GM23248 (cell line): ENCODE measurements at regions of chr17 and their contacts with region 1.

Region 1: DNA sequence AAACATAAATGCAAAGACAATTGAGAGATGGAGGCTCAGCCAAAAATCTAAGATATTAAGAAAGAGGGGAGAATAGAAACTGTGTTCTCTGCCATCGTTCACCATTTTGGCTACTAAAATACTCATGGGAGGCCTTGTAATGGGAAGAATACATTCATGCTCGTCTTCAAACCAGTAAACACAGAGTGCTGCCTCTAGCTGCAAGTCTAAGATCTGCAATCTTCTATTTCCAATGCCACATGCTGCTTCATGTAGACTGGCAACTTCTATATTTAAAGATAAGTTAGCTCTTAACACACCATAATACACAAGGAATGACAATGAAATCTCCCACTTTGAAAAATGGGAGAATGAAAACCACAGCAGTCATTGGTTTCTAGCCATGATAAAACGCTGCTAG is 387.3 kb downstream of the HS3ST3B1 start:
- DNase-seq: no peak
- H3K4me3 ChIP-seq: no peak overlapping the region
- H3K27ac ChIP-seq: no peak overlapping the region
- H3K4me1 ChIP-seq: no peaks in the 10 kb centered on the region
- H3K27me3 ChIP-seq: no peaks in the 10 kb centered on the region

Region 2: GRCh38 chr17:14575471-14575953 is 112.6 kb before region 1 on chr17:
- in situ Hi-C with region 1: loop called (anchors 25 kb)
- DNase-seq: peak; percentile 42
- H3K4me3 ChIP-seq: no peak overlapping the region
- H3K27ac ChIP-seq: no peak overlapping the region
- H3K4me1 ChIP-seq: peaks cover 4% of the 10 kb centered on the region; the same call in 1 of the 2 replicates
- H3K27me3 ChIP-seq: peaks cover 13% of the 10 kb centered on the region; the same call in 1 of the 2 replicates

Region 3: DNA sequence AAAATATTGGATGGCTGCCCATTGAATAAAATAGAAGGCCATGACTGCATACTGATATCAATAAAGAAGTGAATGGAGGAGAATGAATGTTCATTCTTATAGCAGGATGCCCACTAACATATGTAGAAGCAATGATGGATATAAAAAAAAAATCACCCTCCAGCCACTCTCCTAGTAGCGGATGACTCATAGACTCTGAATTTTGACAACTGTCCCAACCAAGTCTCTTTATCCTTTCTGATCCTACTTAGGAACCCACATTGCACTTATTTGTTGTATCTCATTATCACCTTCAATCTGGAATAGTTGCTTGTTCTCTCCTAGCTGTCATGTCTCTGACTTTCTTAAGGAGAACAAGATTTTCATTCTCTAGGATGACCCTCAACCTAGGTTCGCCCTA is 42.7 kb after region 1 on chr17:
- in situ Hi-C with region 1: no loop called
- DNase-seq: no peak
- H3K4me3 ChIP-seq: no peak overlapping the region
- H3K27ac ChIP-seq: no peak overlapping the region
- H3K4me1 ChIP-seq: no peaks in the 10 kb centered on the region
- H3K27me3 ChIP-seq: no peaks in the 10 kb centered on the region